ENCODE measurements at regions of chr7 and their contacts with region 1.

Region 1: GRCh38 chr7:96452146-96452545 is 130.2 kb upstream of the SLC25A13 start:
- DNase-seq: no peak
- H3K4me3 ChIP-seq: no peak overlapping the region
- CTCF ChIP-seq: no peak
- POLR2A ChIP-seq: no peak

Region 2: GRCh38 chr7:95527033-95527775 is 924.9 kb before region 1 on chr7:
- intact Hi-C with region 1: loop called (anchors 10 kb)
- DNase-seq: peak; percentile 53 to 85
- H3K4me3 ChIP-seq: no peak overlapping the region
- CTCF ChIP-seq: peak in 1 of 3 donors; percentile 66
- POLR2A ChIP-seq: no peak

Region 3: GRCh38 chr7:96426027-96426426 is 26.1 kb before region 1 on chr7:
- intact Hi-C with region 1: no loop called
- DNase-seq: no peak
- H3K4me3 ChIP-seq: no peak overlapping the region
- CTCF ChIP-seq: no peak
- POLR2A ChIP-seq: no peak

Region 4: GRCh38 chr7:96599288-96599936 is 147.3 kb after region 1 on chr7:
- intact Hi-C with region 1: no loop called
- DNase-seq: no peak
- H3K4me3 ChIP-seq: no peak overlapping the region
- CTCF ChIP-seq: no peak
- POLR2A ChIP-seq: no peak

Region 5: DNA sequence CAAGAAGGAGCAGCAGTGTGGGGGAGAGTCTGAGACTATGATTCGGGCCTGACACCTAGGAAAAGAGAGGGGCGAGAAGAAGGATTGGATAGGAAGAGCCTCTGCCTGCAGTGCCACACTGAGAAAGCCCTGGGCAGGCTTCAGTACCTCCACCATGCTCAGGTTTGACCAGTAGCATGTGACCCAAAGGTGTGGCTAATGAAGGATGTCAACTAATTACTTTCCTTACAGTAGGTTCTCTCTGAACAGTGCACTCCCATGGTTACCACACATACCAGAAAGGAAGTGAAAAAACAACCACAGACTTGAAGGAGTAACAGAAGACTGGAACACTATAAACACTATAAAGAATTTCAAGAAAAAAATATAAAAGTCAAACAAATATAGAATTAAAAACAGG is 211.3 kb after region 1 on chr7:
- intact Hi-C with region 1: no loop called
- DNase-seq: no peak
- H3K4me3 ChIP-seq: no peak overlapping the region
- CTCF ChIP-seq: no peak
- POLR2A ChIP-seq: no peak